ENCODE measurements at regions of chr2 and their contacts with region 1.

Region 1: GRCh38 chr2:27281855-27282559 is at the start of gene TRIM54:
- DNase-seq: no peak
- ATAC-seq: no peak
- H3K4me3 ChIP-seq: no peak within 1 kb of the TSS
- H3K4me3 Mint-ChIP-seq: no peak within 1 kb of the TSS
- H3K27ac ChIP-seq: no peak within 1 kb of the TSS
- H3K27ac Mint-ChIP-seq: no peak within 1 kb of the TSS
- H3K4me1 ChIP-seq: no peaks in the 10 kb centered on the region
- H3K4me1 Mint-ChIP-seq: peaks cover 5% of the 10 kb centered on the region
- H3K27me3 ChIP-seq: peaks cover 0 to 9% (median 0%) of the 10 kb centered on the region in 4 experiments
- H3K27me3 Mint-ChIP-seq: peaks cover 40% of the 10 kb centered on the region
- CTCF ChIP-seq: no peak
- total RNA-seq, gene TRIM54: not detected in 2 replicates

Region 2: GRCh38 chr2:27095745-27096651 is 186.0 kb before region 1 on chr2:
- CTCF ChIA-PET with region 1: interaction called, 143 read pairs
- POLR2A ChIA-PET with region 1: no interaction called
- intact Hi-C with region 1: loop called (anchors 1 kb)
- DNase-seq: peak; percentile 67
- ATAC-seq: peak; percentile 90
- H3K4me3 ChIP-seq: peak overlapping the region in 3 of 5 experiments; percentile 38 to 55 (median 48)
- H3K4me3 Mint-ChIP-seq: peak overlapping the region; percentile 81
- H3K27ac ChIP-seq: no peak overlapping the region
- H3K27ac Mint-ChIP-seq: peak overlapping the region; percentile 41
- H3K4me1 ChIP-seq: peaks cover 6 to 9% of the 10 kb centered on the region in 2 donors
- H3K4me1 Mint-ChIP-seq: peaks cover 11% of the 10 kb centered on the region
- H3K27me3 ChIP-seq: no peaks in the 10 kb centered on the region
- H3K27me3 Mint-ChIP-seq: no peaks in the 10 kb centered on the region
- CTCF ChIP-seq: no peak

Region 3: GRCh38 chr2:27249891-27250651 is 31.9 kb before region 1 on chr2:
- CTCF ChIA-PET with region 1: interaction called, 10 read pairs
- POLR2A ChIA-PET with region 1: no interaction called
- intact Hi-C with region 1: no loop called
- DNase-seq: peak; percentile 57
- ATAC-seq: peak; percentile 45
- H3K4me3 ChIP-seq: no peak overlapping the region
- H3K4me3 Mint-ChIP-seq: no peak overlapping the region
- H3K27ac ChIP-seq: no peak overlapping the region
- H3K27ac Mint-ChIP-seq: no peak overlapping the region
- H3K4me1 ChIP-seq: peaks cover 0 to 5% of the 10 kb centered on the region in 2 donors
- H3K4me1 Mint-ChIP-seq: no peaks in the 10 kb centered on the region
- H3K27me3 ChIP-seq: peaks cover 0 to 29% (median 9%) of the 10 kb centered on the region in 4 experiments
- H3K27me3 Mint-ChIP-seq: peaks cover 38% of the 10 kb centered on the region
- CTCF ChIP-seq: peak; percentile 51

Region 4: DNA sequence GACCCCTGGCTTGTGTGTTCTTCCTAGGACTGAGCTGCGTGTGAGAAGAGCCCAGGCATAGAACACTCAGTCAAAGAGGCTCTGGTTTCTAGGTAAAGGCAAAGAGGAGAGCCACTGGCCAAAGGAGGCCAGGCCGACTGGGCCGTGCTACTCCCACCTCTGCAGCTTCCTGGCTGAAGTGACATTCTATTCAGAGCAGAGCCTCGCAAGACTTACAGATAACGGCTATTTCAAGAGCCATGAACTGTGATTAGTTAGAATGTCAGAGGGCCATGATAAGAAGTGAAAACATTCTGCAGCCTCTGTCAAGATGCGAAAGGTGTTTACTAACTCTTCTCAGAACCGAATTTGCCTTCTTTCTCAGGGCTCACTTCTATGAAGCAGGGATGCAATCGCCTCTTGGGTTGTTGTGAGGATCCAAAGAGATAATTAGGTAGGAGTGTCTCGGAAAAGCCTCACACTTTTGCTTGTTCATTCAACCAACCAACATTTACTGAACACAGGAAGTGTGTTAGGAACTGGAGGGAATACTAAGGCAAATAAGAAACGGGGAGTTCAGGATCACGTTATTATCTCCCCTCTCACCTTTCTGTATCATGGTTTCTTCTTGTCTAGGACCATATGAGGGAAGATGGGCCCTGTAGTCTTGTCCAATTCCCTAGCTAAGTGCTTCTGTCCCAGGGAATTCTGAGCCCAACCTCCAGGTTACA is 10.2 kb before region 1 on chr2:
- CTCF ChIA-PET with region 1: interaction called, 50 read pairs
- POLR2A ChIA-PET with region 1: no interaction called
- intact Hi-C with region 1: no loop called
- DNase-seq: no peak
- ATAC-seq: no peak
- H3K4me3 ChIP-seq: no peak overlapping the region
- H3K4me3 Mint-ChIP-seq: no peak overlapping the region
- H3K27ac ChIP-seq: no peak overlapping the region
- H3K27ac Mint-ChIP-seq: no peak overlapping the region
- H3K4me1 ChIP-seq: no peaks in the 10 kb centered on the region
- H3K4me1 Mint-ChIP-seq: no peaks in the 10 kb centered on the region
- H3K27me3 ChIP-seq: peaks cover 0 to 18% (median 6%) of the 10 kb centered on the region in 4 experiments
- H3K27me3 Mint-ChIP-seq: peaks cover 33% of the 10 kb centered on the region
- CTCF ChIP-seq: no peak

Measured in B cell (primary cell).